ENCODE measurements at regions of chr7 and their contacts with region 1.

Region 1: DNA sequence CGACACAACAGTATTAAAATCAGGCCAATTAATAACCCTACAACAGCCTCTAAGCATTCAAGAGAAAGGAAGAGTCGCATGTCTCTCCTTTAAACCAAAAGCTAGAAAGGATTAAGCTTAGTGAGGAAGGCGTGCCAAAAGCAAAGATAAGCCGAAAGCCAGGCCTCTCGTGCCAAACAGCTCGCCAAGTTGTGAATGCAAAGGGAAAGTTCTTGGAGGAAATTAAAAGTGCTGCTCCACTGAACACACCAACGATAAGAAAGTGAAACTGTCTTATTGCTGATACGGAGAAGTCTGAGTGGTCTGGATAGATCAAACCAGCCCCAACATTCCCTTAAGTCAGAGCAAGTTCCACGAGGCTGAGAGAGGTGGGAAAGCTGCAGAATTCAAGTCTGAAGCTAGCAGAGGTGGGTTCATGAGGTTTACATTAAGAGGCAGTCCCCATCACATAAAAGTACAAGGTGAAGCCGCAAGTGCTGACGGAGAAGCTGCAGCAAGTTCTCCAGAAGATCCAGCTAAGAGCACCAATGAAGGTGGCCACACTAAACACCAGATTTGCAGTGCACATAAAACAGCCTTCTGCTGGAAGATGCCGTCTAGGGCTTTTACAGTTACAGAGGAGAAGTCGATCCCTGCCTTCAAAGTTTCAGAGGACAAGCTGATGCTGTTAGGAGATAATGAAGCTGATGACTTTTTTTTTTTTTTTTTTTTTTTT is 194.8 kb downstream of the MAD1L1 start:
- DNase-seq: peak; percentile 30
- ATAC-seq: peak; percentile 65
- H3K4me3 Mint-ChIP-seq: peak overlapping the region; percentile 69
- H3K27ac Mint-ChIP-seq: peak overlapping the region; percentile 89
- H3K4me1 Mint-ChIP-seq: peaks cover 55% of the 10 kb centered on the region
- H3K27me3 Mint-ChIP-seq: no peaks in the 10 kb centered on the region

Region 2: GRCh38 chr7:1925349-1925748 is 112.6 kb before region 1 on chr7:
- CTCF ChIA-PET with region 1: interaction called, 3 read pairs
- POLR2A ChIA-PET with region 1: no interaction called
- intact Hi-C with region 1: loop called in 1 of 2 experiments (anchors 2 kb)
- DNase-seq: peak; percentile 45
- ATAC-seq: no peak
- H3K4me3 Mint-ChIP-seq: peak overlapping the region; percentile 10
- H3K27ac Mint-ChIP-seq: no peak overlapping the region
- H3K4me1 Mint-ChIP-seq: peaks cover 86% of the 10 kb centered on the region
- H3K27me3 Mint-ChIP-seq: peaks cover 21% of the 10 kb centered on the region

Region 3: GRCh38 chr7:2019607-2020511 is 18.1 kb before region 1 on chr7:
- CTCF ChIA-PET with region 1: interaction called, 3 read pairs
- POLR2A ChIA-PET with region 1: no interaction called
- intact Hi-C with region 1: loop called in 1 of 2 experiments (anchors 1 kb)
- DNase-seq: peak; percentile 81
- ATAC-seq: peak; percentile 93
- H3K4me3 Mint-ChIP-seq: peak overlapping the region; percentile 45
- H3K27ac Mint-ChIP-seq: peak overlapping the region; percentile 86
- H3K4me1 Mint-ChIP-seq: peaks cover 25% of the 10 kb centered on the region
- H3K27me3 Mint-ChIP-seq: no peaks in the 10 kb centered on the region

Measured in activated CD4-positive, alpha-beta T cell treated with anti-CD3 and anti-CD28 coated beads for 36 hours (primary cell).